ENCODE measurements at regions of chr1 and their contacts with region 1.

Region 1: DNA sequence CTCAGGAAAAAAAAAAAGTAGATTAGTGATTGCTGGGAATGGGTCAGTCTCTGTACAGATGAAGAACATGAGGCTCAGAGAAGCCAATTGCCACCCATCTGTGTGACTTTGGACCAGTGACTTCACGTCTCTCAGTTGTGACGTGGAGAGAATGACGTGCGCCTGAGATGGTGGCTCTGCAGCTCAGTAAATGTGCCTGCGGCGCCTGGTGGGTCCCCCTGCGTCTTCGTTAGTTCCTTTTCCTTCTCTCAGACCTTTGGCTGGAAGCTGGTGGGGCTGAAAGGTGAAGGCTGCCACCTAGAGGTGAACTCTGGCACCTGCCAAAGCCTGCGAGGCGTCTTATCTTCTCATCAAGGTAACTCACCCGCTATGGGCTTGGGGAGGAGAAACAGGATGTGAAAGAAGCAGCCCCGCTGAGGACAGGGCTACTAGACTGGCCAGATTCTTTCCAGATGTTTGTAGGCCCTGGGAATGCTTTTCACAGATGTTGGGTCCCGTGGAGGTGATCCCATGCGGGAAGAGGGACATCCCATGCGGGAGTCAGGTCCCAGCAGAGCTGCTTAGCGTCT is 8.7 kb upstream of the E2F2 start:
- DNase-seq: peak; percentile 92
- ATAC-seq: peak; percentile 93
- H3K4me3 ChIP-seq: no peak overlapping the region
- H3K27ac ChIP-seq: no peak overlapping the region
- H3K4me1 ChIP-seq: peaks cover 7% of the 10 kb centered on the region
- H3K27me3 ChIP-seq: no peaks in the 10 kb centered on the region
- CTCF ChIP-seq: peak; percentile 96 to 99 (median 99); a peak in 5 of 6 replicates
- EP300 ChIP-seq: peak in 1 of 2 experiments; percentile 33; a peak in 1 of 4 replicates
- POLR2A ChIP-seq: no peak
- RAD21 ChIP-seq: peak; percentile 98

Region 2: DNA sequence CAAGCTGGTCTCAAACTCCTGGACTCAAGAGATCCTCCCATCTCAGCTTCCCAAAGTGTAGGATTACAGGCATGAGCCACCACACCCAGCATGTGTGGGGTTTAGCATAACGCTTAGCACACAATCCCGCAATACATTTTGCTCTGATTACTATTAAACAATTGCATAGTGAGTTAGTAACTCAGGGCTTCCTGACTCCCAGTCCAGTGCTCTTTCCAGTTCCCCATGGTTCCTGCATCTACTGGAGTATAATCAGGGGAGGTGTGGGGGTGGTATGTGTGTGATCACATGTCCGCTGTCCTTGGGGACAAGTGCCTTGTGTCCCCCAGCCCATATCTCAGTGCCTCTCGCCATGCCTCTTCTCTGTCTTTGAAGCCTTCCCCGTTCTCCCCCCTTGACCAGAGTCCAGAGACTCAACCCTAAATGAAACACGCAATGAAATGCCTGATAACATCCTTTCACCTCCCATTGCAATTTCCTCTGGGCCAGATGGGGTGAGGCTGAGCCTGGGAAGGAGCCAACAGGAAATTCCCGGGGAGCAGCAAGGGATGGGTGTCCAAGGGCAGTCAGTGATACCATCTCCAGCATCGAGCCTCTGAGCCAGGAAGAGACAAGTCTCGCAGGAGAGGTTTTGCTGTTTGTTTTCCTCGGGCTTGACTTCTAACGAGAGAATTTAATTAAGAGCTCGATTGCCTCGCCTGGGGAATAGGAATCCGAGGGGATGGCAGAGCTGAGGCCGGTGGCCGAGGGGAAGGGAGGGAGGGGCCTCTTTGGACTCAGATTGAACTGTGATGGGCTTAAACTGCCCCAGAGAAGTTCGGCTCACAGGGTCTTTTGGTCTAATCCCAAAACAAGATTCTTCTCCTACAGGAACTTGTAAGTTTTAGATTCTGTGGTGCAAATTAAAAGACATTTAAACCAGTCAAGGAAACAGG is 314.8 kb before region 1 on chr1:
- CTCF ChIA-PET with region 1: no interaction called
- POLR2A ChIA-PET with region 1: no interaction called
- RAD21 ChIA-PET with region 1: no interaction called
- SMC1A ChIA-PET with region 1: no interaction called
- in situ Hi-C with region 1: no loop called
- intact Hi-C with region 1: no loop called
- DNase-seq: no peak
- ATAC-seq: no peak
- H3K4me3 ChIP-seq: no peak overlapping the region
- H3K27ac ChIP-seq: no peak overlapping the region
- H3K4me1 ChIP-seq: no peaks in the 10 kb centered on the region
- H3K27me3 ChIP-seq: no peaks in the 10 kb centered on the region; a peak in 1 of 4 replicates
- CTCF ChIP-seq: no peak
- EP300 ChIP-seq: no peak
- POLR2A ChIP-seq: no peak
- RAD21 ChIP-seq: no peak

Region 3: GRCh38 chr1:23507507-23507906 is 32.3 kb before region 1 on chr1:
- CTCF ChIA-PET with region 1: interaction called, 784 read pairs
- POLR2A ChIA-PET with region 1: no interaction called
- RAD21 ChIA-PET with region 1: interaction called, 272 read pairs
- SMC1A ChIA-PET with region 1: interaction called, 258 read pairs
- in situ Hi-C with region 1: no loop called
- intact Hi-C with region 1: no loop called
- DNase-seq: no peak
- ATAC-seq: no peak
- H3K4me3 ChIP-seq: no peak overlapping the region
- H3K27ac ChIP-seq: no peak overlapping the region
- H3K4me1 ChIP-seq: no peaks in the 10 kb centered on the region
- H3K27me3 ChIP-seq: no peaks in the 10 kb centered on the region
- CTCF ChIP-seq: no peak
- EP300 ChIP-seq: no peak
- POLR2A ChIP-seq: no peak
- RAD21 ChIP-seq: no peak

Region 4: DNA sequence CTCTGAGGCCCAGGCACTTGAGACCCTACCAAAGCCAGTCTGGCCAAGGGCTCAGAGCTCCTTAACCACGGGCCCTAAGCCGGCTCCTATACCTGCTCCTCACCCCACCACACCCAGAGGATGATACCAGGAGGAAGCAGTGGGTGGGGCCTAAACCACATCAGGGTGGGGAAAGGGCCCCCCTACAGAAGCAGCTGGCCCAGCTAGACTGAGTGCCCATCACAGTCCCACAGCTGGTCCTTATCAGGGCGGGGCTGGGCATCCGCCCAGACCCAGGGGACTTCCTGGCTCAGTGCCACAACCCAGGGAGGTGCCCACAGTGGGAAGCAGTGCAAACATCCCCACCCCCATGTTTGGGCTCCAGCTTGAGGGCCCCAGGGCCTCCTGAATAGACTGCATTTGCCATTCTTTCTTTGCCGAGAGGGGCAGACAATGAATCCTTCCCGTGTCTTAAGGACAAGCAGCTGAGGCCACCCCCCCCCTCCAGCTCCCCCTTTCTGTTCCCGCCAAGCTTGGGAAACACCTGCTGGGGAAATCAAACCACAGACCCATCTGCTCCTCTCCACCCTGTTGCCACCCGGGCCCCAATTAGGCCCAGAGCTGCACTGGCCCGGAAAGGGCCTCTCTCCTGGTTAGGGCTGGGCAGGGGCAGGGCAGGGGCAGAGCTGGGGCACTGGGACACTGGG is 14.9 kb before region 1 on chr1:
- CTCF ChIA-PET with region 1: interaction called, 142 read pairs
- POLR2A ChIA-PET with region 1: interaction called, 10 read pairs
- RAD21 ChIA-PET with region 1: interaction called, 67 read pairs
- SMC1A ChIA-PET with region 1: interaction called, 71 read pairs
- in situ Hi-C with region 1: no loop called
- intact Hi-C with region 1: no loop called
- DNase-seq: no peak
- ATAC-seq: peak; percentile 49
- H3K4me3 ChIP-seq: peak overlapping the region; percentile 44
- H3K27ac ChIP-seq: peak overlapping the region; percentile 77
- H3K4me1 ChIP-seq: peaks cover 56% of the 10 kb centered on the region
- H3K27me3 ChIP-seq: no peaks in the 10 kb centered on the region
- CTCF ChIP-seq: no peak
- EP300 ChIP-seq: no peak
- POLR2A ChIP-seq: no peak
- RAD21 ChIP-seq: no peak

Region 5: DNA sequence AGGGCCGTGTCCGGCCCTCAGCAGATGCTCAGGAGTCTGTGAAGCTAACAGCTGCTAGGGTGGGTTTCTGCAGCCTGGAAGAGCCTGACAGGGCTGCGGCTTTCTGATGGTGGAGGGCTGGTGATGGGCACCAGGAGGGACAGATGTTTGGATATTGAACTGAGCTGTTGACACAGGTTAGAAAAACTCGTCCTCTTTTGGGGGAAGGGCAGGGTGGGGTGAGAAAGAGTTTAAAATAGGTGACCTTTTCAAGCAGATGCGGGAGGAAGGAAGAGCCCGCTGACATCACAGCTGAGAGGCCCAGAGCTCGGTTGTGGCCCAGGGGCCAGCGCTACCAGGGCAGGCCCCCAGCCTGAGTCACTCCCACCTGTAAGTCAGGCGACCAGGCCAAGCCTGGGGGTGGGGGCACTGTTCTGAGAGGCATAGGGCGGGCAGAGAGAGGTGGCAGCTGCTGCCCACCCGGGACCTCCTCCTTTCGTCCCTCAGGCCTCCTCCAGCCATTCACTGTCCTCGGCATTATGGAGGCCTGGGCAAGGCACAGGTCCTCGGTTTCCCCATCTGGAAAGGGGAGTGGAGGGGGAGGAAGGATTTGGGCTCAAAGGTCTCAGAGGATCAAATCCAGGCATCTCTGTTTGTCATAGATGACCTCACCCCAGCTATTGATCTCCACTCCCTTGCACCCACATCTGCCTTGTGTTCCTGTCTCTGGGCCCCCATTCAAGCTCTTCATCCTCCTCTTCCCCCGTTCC is 51.9 kb after region 1 on chr1:
- CTCF ChIA-PET with region 1: interaction called, 4 read pairs
- POLR2A ChIA-PET with region 1: interaction called, 3 read pairs
- RAD21 ChIA-PET with region 1: interaction called, 8 read pairs
- SMC1A ChIA-PET with region 1: interaction called, 19 read pairs
- in situ Hi-C with region 1: no loop called
- intact Hi-C with region 1: no loop called
- DNase-seq: no peak
- ATAC-seq: peak; percentile 71
- H3K4me3 ChIP-seq: peak overlapping the region; percentile 9; the same call in 1 of the 2 replicates
- H3K27ac ChIP-seq: peak overlapping the region; percentile 93
- H3K4me1 ChIP-seq: peaks cover 72% of the 10 kb centered on the region
- H3K27me3 ChIP-seq: no peaks in the 10 kb centered on the region
- CTCF ChIP-seq: no peak
- EP300 ChIP-seq: peak; percentile 80 to 81; a peak in 3 of 4 replicates
- POLR2A ChIP-seq: peak; percentile 48; the same call in 1 of the 2 replicates
- RAD21 ChIP-seq: no peak

Region 6: GRCh38 chr1:23664837-23665795 is 125.3 kb after region 1 on chr1:
- CTCF ChIA-PET with region 1: interaction called, 20 read pairs
- POLR2A ChIA-PET with region 1: interaction called, 3 read pairs
- RAD21 ChIA-PET with region 1: interaction called, 6 read pairs
- SMC1A ChIA-PET with region 1: interaction called, 13 read pairs
- in situ Hi-C with region 1: no loop called
- intact Hi-C with region 1: no loop called
- DNase-seq: peak; percentile 15
- ATAC-seq: peak; percentile 89
- H3K4me3 ChIP-seq: no peak overlapping the region
- H3K27ac ChIP-seq: no peak overlapping the region
- H3K4me1 ChIP-seq: peaks cover 6% of the 10 kb centered on the region; the same call in 1 of the 2 replicates
- H3K27me3 ChIP-seq: no peaks in the 10 kb centered on the region
- CTCF ChIP-seq: peak; percentile 6 to 45 (median 23); a peak in 3 of 6 replicates
- EP300 ChIP-seq: no peak
- POLR2A ChIP-seq: no peak
- RAD21 ChIP-seq: peak; percentile 41